IMR-90 (cell line): ENCODE measurements at regions of chr3 and their contacts with region 1.

Region 1: GRCh38 chr3:16600780-16601539 is 4.3 kb downstream of the DAZL start:
- DNase-seq: peak; percentile 81
- ATAC-seq: peak; percentile 79
- H3K4me3 ChIP-seq: no peak overlapping the region
- H3K27ac ChIP-seq: no peak overlapping the region
- H3K4me1 ChIP-seq: no peaks in the 10 kb centered on the region
- H3K27me3 ChIP-seq: peaks cover 3% of the 10 kb centered on the region
- CTCF ChIP-seq: peak; percentile 88
- POLR2A ChIP-seq: no peak
- RAD21 ChIP-seq: peak; percentile 91

Region 2: DNA sequence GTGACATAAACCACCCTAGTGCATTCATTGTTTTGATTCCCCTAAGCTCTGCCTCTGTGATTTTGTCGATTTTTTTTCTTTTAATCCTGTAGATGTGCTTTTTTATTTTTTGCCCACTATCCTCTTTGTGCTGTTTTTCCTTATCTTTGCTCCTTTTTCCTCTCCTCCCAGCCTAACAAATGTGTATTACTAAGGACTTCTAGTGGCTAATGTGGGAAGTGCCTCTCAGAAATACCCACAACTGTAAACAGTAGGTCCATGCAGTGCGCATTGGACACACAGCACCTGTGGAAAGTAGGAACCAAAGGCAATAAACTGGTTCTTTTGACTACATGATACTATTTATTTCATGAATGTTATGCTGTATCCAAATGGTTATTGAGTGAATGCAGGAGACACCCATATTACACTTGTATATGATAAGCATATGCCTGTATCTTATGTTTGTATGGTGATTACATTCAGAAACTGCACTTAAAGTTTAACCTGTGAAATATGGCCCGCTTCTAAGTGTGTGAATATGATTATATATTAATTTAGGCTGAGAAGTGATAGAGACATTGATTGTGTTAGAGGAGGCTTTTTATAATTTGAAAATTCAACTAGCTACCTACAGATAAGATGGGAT is 431.6 kb after region 1 on chr3:
- CTCF ChIA-PET with region 1: interaction called, 3 read pairs
- POLR2A ChIA-PET with region 1: no interaction called
- dilution Hi-C with region 1: no loop called
- in situ Hi-C with region 1: no loop called
- intact Hi-C with region 1: loop called (anchors 2 kb)
- DNase-seq: peak; percentile 36
- ATAC-seq: peak; percentile 80
- H3K4me3 ChIP-seq: no peak overlapping the region
- H3K27ac ChIP-seq: no peak overlapping the region
- H3K4me1 ChIP-seq: no peaks in the 10 kb centered on the region
- H3K27me3 ChIP-seq: no peaks in the 10 kb centered on the region
- CTCF ChIP-seq: peak; percentile 49
- POLR2A ChIP-seq: no peak
- RAD21 ChIP-seq: peak; percentile 50

Region 3: GRCh38 chr3:17195856-17196604 is 595.1 kb after region 1 on chr3:
- CTCF ChIA-PET with region 1: no interaction called
- POLR2A ChIA-PET with region 1: no interaction called
- dilution Hi-C with region 1: loop called (anchors 25 kb)
- in situ Hi-C with region 1: no loop called
- intact Hi-C with region 1: no loop called
- DNase-seq: peak; percentile 24
- ATAC-seq: peak; percentile 62
- H3K4me3 ChIP-seq: no peak overlapping the region
- H3K27ac ChIP-seq: no peak overlapping the region
- H3K4me1 ChIP-seq: peaks cover 3% of the 10 kb centered on the region; the same call in 1 of the 2 replicates
- H3K27me3 ChIP-seq: no peaks in the 10 kb centered on the region
- CTCF ChIP-seq: peak; percentile 36; the same call in 1 of the 2 replicates
- POLR2A ChIP-seq: no peak
- RAD21 ChIP-seq: no peak

Region 4: DNA sequence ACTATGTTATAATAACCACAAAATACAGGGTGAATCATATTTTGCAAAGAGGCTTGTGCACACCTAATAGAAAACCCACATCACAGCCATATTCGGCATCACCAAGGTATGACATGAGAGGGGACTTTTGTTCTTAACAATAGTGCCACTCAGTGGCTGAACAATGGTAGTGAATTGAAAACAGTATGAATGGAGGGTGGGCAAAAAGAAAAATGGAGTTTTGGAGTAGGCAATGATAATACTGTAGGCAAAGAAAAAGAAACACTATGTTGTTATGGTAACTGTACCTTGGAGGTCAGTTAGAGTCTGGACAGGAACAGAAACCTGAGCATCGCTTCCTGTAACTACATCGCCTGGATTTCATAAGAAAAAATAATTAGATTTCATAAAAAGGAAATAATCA is 632.4 kb after region 1 on chr3:
- CTCF ChIA-PET with region 1: interaction called, 3 read pairs
- POLR2A ChIA-PET with region 1: no interaction called
- dilution Hi-C with region 1: no loop called
- in situ Hi-C with region 1: loop called (anchors 5 kb)
- intact Hi-C with region 1: loop called (anchors 1 kb)
- DNase-seq: peak; percentile 67
- ATAC-seq: peak; percentile 86
- H3K4me3 ChIP-seq: no peak overlapping the region
- H3K27ac ChIP-seq: no peak overlapping the region
- H3K4me1 ChIP-seq: no peaks in the 10 kb centered on the region
- H3K27me3 ChIP-seq: no peaks in the 10 kb centered on the region
- CTCF ChIP-seq: peak; percentile 75
- POLR2A ChIP-seq: no peak
- RAD21 ChIP-seq: peak; percentile 87

Region 5: DNA sequence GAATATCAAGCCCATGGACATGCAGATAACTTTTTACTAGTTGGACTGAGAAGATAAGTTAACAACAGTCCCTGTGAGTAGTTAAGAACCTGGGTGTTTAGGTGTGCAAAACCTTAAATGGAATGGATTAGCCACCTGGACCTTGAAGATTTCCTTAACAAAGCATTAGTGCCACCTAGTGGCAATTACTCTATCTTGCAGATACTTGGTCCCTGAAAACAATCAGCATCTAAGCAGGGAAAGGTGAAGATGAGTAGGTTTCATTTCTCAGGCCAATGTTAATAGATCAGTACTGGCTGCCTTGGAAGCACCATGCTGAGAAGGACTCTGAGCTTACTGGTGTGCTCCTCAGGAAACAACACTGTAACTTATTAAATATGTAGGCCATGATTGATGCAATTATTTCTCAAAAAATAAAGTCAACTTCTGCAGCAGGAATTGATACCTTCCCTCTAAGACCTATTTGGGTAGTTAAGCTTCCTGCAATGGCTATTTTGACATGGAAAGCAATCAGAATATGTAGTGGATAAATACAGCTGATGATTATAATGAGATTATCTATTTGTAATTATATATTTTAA is 812.1 kb after region 1 on chr3:
- CTCF ChIA-PET with region 1: no interaction called
- POLR2A ChIA-PET with region 1: no interaction called
- dilution Hi-C with region 1: no loop called
- in situ Hi-C with region 1: loop called (anchors 5 kb)
- intact Hi-C with region 1: loop called (anchors 2 kb)
- DNase-seq: peak; percentile 64
- ATAC-seq: peak; percentile 67
- H3K4me3 ChIP-seq: no peak overlapping the region
- H3K27ac ChIP-seq: no peak overlapping the region
- H3K4me1 ChIP-seq: no peaks in the 10 kb centered on the region
- H3K27me3 ChIP-seq: no peaks in the 10 kb centered on the region
- CTCF ChIP-seq: peak; percentile 76
- POLR2A ChIP-seq: no peak
- RAD21 ChIP-seq: peak; percentile 75

Region 6: GRCh38 chr3:18389108-18389733 is 1788.3 kb after region 1 on chr3:
- CTCF ChIA-PET with region 1: no interaction called
- POLR2A ChIA-PET with region 1: no interaction called
- dilution Hi-C with region 1: no loop called
- in situ Hi-C with region 1: no loop called
- intact Hi-C with region 1: loop called (anchors 5 kb)
- DNase-seq: peak; percentile 5
- ATAC-seq: no peak
- H3K4me3 ChIP-seq: no peak overlapping the region
- H3K27ac ChIP-seq: no peak overlapping the region
- H3K4me1 ChIP-seq: no peaks in the 10 kb centered on the region
- H3K27me3 ChIP-seq: no peaks in the 10 kb centered on the region
- CTCF ChIP-seq: peak; percentile 57
- POLR2A ChIP-seq: no peak
- RAD21 ChIP-seq: peak; percentile 32